ENCODE measurements at regions of chr15 and their contacts with region 1.

Region 1: DNA sequence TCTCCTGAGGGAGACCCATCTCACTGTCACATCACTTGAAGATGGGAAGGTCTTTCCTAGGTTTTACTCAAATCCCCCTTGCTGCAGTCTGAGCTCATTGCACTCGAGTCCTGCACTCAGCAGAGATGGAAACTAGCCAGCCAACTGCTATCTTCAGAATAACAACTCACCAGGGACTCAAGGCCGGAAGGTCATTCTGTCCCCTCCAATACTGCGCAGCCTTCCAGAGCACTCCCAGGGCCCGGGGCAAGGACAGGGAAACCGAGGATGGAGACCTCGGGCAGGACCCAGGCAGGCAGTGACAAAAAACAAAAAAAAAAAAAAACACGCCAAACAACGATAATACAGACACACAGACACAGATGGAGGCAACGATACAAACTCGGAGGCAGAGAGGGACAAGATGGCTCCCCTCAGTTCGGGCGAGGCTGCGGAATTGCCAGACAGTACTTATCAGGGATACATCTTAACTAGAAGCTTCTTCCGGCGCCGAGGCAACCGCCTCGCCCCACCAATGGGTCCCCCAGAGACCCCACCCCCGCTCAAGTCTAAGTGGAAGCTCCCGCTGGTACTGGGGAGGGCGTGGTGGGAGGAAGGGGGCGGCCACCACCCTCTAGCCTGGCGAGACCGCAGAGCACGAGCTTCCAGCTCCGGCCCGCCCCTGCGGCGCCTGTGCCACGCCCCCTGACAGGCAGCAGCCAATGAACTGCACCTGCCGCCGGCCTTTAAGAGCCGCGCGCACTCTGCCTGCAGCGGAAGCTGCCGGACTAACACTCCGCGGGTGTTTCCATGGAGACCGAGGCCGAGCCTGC is 7.0 kb upstream of the MAP1A start:
- DNase-seq: peak; percentile 91 to 99 (median 95)
- ATAC-seq: peak; percentile 87
- H3K4me3 ChIP-seq: peak overlapping the region; percentile 80
- H3K4me3 Mint-ChIP-seq: peak overlapping the region; percentile 91
- H3K27ac ChIP-seq: peak overlapping the region; percentile 76 to 84
- H3K27ac Mint-ChIP-seq: peak overlapping the region; percentile 91
- H3K4me1 ChIP-seq: peaks cover 31% of the 10 kb centered on the region
- H3K4me1 Mint-ChIP-seq: peaks cover 32% of the 10 kb centered on the region
- H3K27me3 ChIP-seq: no peaks in the 10 kb centered on the region
- H3K27me3 Mint-ChIP-seq: peaks cover 1% of the 10 kb centered on the region
- CTCF ChIP-seq: no peak

Region 2: GRCh38 chr15:43370975-43371974 is 139.1 kb before region 1 on chr15 and contains the starts of genes TUBGCP4 and ZSCAN29:
- CTCF ChIA-PET with region 1: interaction called, 6 read pairs
- POLR2A ChIA-PET with region 1: interaction called, 3 read pairs
- intact Hi-C with region 1: loop called in 1 of 2 experiments (anchors 2 kb)
- DNase-seq: peak; percentile 36 to 86 (median 64)
- ATAC-seq: peak; percentile 69
- H3K4me3 ChIP-seq: peak within 1 kb of the TSS; percentile 90
- H3K4me3 Mint-ChIP-seq: peak within 1 kb of the TSS; percentile 91
- H3K27ac ChIP-seq: peak within 1 kb of the TSS; percentile 36 to 46
- H3K27ac Mint-ChIP-seq: peak within 1 kb of the TSS; percentile 74
- H3K4me1 ChIP-seq: peaks cover 35% of the 10 kb centered on the region
- H3K4me1 Mint-ChIP-seq: peaks cover 57% of the 10 kb centered on the region
- H3K27me3 ChIP-seq: no peaks in the 10 kb centered on the region
- H3K27me3 Mint-ChIP-seq: no peaks in the 10 kb centered on the region
- CTCF ChIP-seq: peak; percentile 70
- total RNA-seq, gene TUBGCP4: 4.1 to 5.9 TPM
- total RNA-seq, gene ZSCAN29: 7.1 to 7.4 TPM

Region 3: GRCh38 chr15:43465105-43465504 is 45.3 kb before region 1 on chr15:
- CTCF ChIA-PET with region 1: interaction called, 11 read pairs
- POLR2A ChIA-PET with region 1: no interaction called
- intact Hi-C with region 1: no loop called
- DNase-seq: no peak
- ATAC-seq: no peak
- H3K4me3 ChIP-seq: no peak overlapping the region
- H3K4me3 Mint-ChIP-seq: no peak overlapping the region
- H3K27ac ChIP-seq: no peak overlapping the region
- H3K27ac Mint-ChIP-seq: no peak overlapping the region
- H3K4me1 ChIP-seq: no peaks in the 10 kb centered on the region
- H3K4me1 Mint-ChIP-seq: no peaks in the 10 kb centered on the region
- H3K27me3 ChIP-seq: no peaks in the 10 kb centered on the region
- H3K27me3 Mint-ChIP-seq: no peaks in the 10 kb centered on the region
- CTCF ChIP-seq: no peak

Region 4: GRCh38 chr15:43492673-43493601 is 17.5 kb before region 1 on chr15 and contains the start of gene TP53BP1:
- CTCF ChIA-PET with region 1: interaction called, 25 read pairs
- POLR2A ChIA-PET with region 1: interaction called, 55 read pairs
- intact Hi-C with region 1: loop called (anchors 1 kb)
- DNase-seq: peak; percentile 89 to 97 (median 94)
- ATAC-seq: peak; percentile 98
- H3K4me3 ChIP-seq: peak within 1 kb of the TSS; percentile 78
- H3K4me3 Mint-ChIP-seq: peak within 1 kb of the TSS; percentile 95
- H3K27ac ChIP-seq: peak within 1 kb of the TSS; percentile 84 to 85
- H3K27ac Mint-ChIP-seq: peak within 1 kb of the TSS; percentile 89
- H3K4me1 ChIP-seq: peaks cover 15% of the 10 kb centered on the region
- H3K4me1 Mint-ChIP-seq: peaks cover 37% of the 10 kb centered on the region
- H3K27me3 ChIP-seq: no peaks in the 10 kb centered on the region
- H3K27me3 Mint-ChIP-seq: no peaks in the 10 kb centered on the region
- CTCF ChIP-seq: no peak
- total RNA-seq, gene TP53BP1: 43.0 to 44.6 TPM